ENCODE measurements at regions of chr5 and their contacts with region 1.

Region 1: GRCh38 chr5:103139264-103139865 is 19.3 kb downstream of the PPIP5K2 start:
- DNase-seq: peak; percentile 69
- ATAC-seq: peak; percentile 98
- H3K4me3 ChIP-seq: no peak overlapping the region
- H3K27ac ChIP-seq: no peak overlapping the region
- H3K4me1 ChIP-seq: no peaks in the 10 kb centered on the region
- H3K27me3 ChIP-seq: no peaks in the 10 kb centered on the region
- CTCF ChIP-seq: peak; percentile 90
- EP300 ChIP-seq: no peak
- POLR2A ChIP-seq: no peak
- RAD21 ChIP-seq: peak; percentile 78

Region 2: GRCh38 chr5:102583276-102584124 is 555.9 kb before region 1 on chr5:
- CTCF ChIA-PET with region 1: interaction called, 6 read pairs
- POLR2A ChIA-PET with region 1: no interaction called
- in situ Hi-C with region 1: no loop called
- intact Hi-C with region 1: loop called (anchors 1 kb)
- DNase-seq: no peak
- ATAC-seq: no peak
- H3K4me3 ChIP-seq: no peak overlapping the region
- H3K27ac ChIP-seq: no peak overlapping the region
- H3K4me1 ChIP-seq: no peaks in the 10 kb centered on the region
- H3K27me3 ChIP-seq: no peaks in the 10 kb centered on the region; a peak in 1 of 5 replicates
- CTCF ChIP-seq: no peak
- EP300 ChIP-seq: no peak
- POLR2A ChIP-seq: no peak
- RAD21 ChIP-seq: no peak

Region 3: DNA sequence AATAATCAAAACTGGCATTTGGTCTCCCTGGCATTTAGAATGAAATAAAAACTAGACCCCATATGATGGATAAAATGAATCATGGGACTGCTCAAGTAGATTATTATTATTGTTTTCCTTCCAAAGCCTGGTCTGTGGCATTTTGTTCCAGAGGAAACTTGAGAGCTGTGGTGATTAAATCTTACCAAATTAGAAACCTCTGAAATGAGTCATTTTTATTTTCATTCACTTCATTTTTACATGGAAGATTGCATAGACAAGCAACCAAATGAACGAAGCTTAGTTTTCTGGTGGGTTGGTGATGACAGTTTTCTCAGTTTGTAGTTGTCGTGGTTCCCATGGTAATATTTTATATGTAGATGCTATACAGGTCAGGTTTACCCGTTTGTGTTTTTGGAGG is 360.9 kb before region 1 on chr5:
- CTCF ChIA-PET with region 1: interaction called, 18 read pairs
- POLR2A ChIA-PET with region 1: no interaction called
- in situ Hi-C with region 1: loop called (anchors 10 kb)
- intact Hi-C with region 1: loop called (anchors 1 kb)
- DNase-seq: no peak
- ATAC-seq: no peak
- H3K4me3 ChIP-seq: no peak overlapping the region
- H3K27ac ChIP-seq: no peak overlapping the region
- H3K4me1 ChIP-seq: no peaks in the 10 kb centered on the region
- H3K27me3 ChIP-seq: no peaks in the 10 kb centered on the region
- CTCF ChIP-seq: no peak
- EP300 ChIP-seq: no peak
- POLR2A ChIP-seq: no peak
- RAD21 ChIP-seq: no peak

Region 4: DNA sequence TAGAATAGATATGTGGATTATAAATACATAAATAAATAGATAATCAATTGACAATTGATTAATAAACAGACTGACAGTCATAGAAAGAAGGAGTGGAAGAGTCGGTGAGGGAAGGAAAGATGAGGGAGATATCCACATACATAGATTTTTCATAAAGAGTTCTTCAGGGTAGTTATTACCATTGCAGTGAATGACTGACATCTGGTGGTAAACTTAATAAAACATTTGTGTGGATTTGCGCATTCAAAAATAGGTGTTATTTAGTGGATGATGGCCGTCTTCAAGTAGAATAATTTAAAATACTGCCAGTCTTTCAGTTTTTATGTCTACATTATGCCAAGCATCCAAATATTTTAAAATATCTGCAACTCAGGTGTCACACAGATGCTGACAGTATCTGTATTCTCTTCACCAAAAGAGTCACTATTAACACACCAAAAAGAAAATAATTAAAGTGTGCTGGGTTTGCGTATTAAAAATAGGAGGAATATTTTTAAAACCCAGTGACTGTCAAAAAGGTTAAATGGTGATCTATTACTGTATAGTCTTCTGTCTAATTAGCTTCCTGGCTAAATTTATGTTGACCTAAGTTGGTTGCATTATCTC is 98.2 kb before region 1 on chr5:
- CTCF ChIA-PET with region 1: no interaction called
- POLR2A ChIA-PET with region 1: no interaction called
- in situ Hi-C with region 1: no loop called
- intact Hi-C with region 1: loop called (anchors 2 kb)
- DNase-seq: peak; percentile 20
- ATAC-seq: no peak
- H3K4me3 ChIP-seq: no peak overlapping the region
- H3K27ac ChIP-seq: no peak overlapping the region
- H3K4me1 ChIP-seq: no peaks in the 10 kb centered on the region
- H3K27me3 ChIP-seq: no peaks in the 10 kb centered on the region
- CTCF ChIP-seq: peak; percentile 53
- EP300 ChIP-seq: no peak
- POLR2A ChIP-seq: no peak
- RAD21 ChIP-seq: no peak